IMR-90 (cell line): ENCODE measurements at regions of chr1 and their contacts with region 1.

Region 1: DNA sequence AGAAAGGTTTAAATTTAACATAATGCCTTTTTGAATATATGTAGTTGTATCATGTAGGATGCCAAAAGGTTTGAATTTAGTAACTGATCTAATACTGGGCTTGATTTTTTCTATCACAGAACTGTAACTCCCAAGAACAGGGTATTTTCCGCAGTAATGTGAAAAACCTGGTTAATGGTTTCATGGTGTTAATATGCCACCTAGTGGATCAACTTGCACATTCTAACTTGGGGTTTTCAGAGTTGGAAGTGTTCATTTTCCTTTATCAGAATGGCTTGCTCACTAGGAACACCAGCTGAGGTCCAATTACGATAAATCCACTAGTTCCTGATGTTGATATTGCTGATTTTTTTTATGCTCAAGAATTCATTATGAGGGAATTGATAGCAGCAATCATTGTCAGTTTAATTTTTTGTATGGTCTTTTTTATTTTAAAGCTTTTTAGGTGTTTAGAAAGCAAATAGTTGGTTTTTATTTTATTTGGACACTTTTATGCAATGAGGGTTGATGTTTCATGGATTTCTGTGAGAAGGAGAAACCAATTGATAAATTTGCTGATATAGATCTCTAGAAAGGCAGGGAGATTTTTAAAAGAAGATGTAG is 157.2 kb downstream of the PLA2G4A start:
- DNase-seq: peak; percentile 78
- ATAC-seq: peak; percentile 72
- H3K4me3 ChIP-seq: no peak overlapping the region
- H3K27ac ChIP-seq: no peak overlapping the region
- H3K4me1 ChIP-seq: peaks cover 6% of the 10 kb centered on the region
- H3K27me3 ChIP-seq: no peaks in the 10 kb centered on the region
- CTCF ChIP-seq: peak; percentile 90
- POLR2A ChIP-seq: 0 out of 2 replicates have a peak, but pooled peaks have one; percentile 38
- RAD21 ChIP-seq: peak; percentile 96

Region 2: GRCh38 chr1:186404454-186405051 is 581.4 kb before region 1 on chr1:
- CTCF ChIA-PET with region 1: no interaction called
- POLR2A ChIA-PET with region 1: no interaction called
- dilution Hi-C with region 1: no loop called
- in situ Hi-C with region 1: loop called (anchors 5 kb)
- intact Hi-C with region 1: loop called (anchors 1 kb)
- DNase-seq: peak; percentile 76
- ATAC-seq: peak; percentile 92
- H3K4me3 ChIP-seq: no peak overlapping the region
- H3K27ac ChIP-seq: no peak overlapping the region
- H3K4me1 ChIP-seq: no peaks in the 10 kb centered on the region; the same call in 1 of the 2 replicates
- H3K27me3 ChIP-seq: no peaks in the 10 kb centered on the region
- CTCF ChIP-seq: peak; percentile 80
- POLR2A ChIP-seq: no peak
- RAD21 ChIP-seq: peak; percentile 72

Region 3: GRCh38 chr1:186605762-186606350 is 380.1 kb before region 1 on chr1:
- CTCF ChIA-PET with region 1: interaction called, 4 read pairs
- POLR2A ChIA-PET with region 1: no interaction called
- dilution Hi-C with region 1: loop called (anchors 25 kb)
- in situ Hi-C with region 1: loop called (anchors 5 kb)
- intact Hi-C with region 1: loop called (anchors 1 kb)
- DNase-seq: peak; percentile 59
- ATAC-seq: peak; percentile 88
- H3K4me3 ChIP-seq: no peak overlapping the region
- H3K27ac ChIP-seq: no peak overlapping the region
- H3K4me1 ChIP-seq: no peaks in the 10 kb centered on the region
- H3K27me3 ChIP-seq: no peaks in the 10 kb centered on the region
- CTCF ChIP-seq: peak; percentile 68
- POLR2A ChIP-seq: no peak
- RAD21 ChIP-seq: peak; percentile 81

Region 4: GRCh38 chr1:186680245-186681061 is 305.5 kb before region 1 on chr1 and contains the start of gene PTGS2:
- CTCF ChIA-PET with region 1: no interaction called
- POLR2A ChIA-PET with region 1: no interaction called
- dilution Hi-C with region 1: no loop called
- in situ Hi-C with region 1: loop called (anchors 10 kb)
- intact Hi-C with region 1: loop called (anchors 1 kb)
- DNase-seq: peak; percentile 93
- ATAC-seq: peak; percentile 96
- H3K4me3 ChIP-seq: peak within 1 kb of the TSS; percentile 65
- H3K27ac ChIP-seq: peak within 1 kb of the TSS; percentile 72
- H3K4me1 ChIP-seq: no peaks in the 10 kb centered on the region
- H3K27me3 ChIP-seq: no peaks in the 10 kb centered on the region
- CTCF ChIP-seq: peak; percentile 60
- POLR2A ChIP-seq: peak; percentile 85
- RAD21 ChIP-seq: peak; percentile 35
- total RNA-seq, gene PTGS2: 4.8 and 6.9 TPM in 2 replicates

Region 5: DNA sequence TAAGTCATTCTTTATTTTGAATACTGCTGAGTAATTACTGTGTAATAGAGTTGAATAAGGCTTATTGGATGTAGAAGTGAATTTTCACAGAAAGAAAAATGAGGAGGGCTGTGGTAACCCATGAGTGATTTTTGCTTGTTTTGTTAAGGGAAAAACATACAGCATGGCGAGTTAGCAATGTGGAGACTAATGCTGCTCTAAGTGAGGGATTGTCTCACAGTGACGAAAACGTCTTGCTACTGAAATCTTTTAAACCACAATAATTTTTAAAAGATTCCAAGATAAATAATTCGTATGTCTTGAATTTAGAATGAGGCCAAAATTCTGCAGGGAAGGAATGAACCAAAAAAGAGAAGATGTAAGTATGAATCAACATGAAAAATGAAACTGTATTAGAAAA is 173.4 kb before region 1 on chr1:
- CTCF ChIA-PET with region 1: no interaction called
- POLR2A ChIA-PET with region 1: no interaction called
- dilution Hi-C with region 1: no loop called
- in situ Hi-C with region 1: no loop called
- intact Hi-C with region 1: loop called (anchors 5 kb)
- DNase-seq: peak; percentile 96
- ATAC-seq: peak; percentile 98
- H3K4me3 ChIP-seq: no peak overlapping the region
- H3K27ac ChIP-seq: no peak overlapping the region
- H3K4me1 ChIP-seq: no peaks in the 10 kb centered on the region
- H3K27me3 ChIP-seq: no peaks in the 10 kb centered on the region; the same call in 1 of the 2 replicates
- CTCF ChIP-seq: no peak
- POLR2A ChIP-seq: no peak
- RAD21 ChIP-seq: no peak

Region 6: GRCh38 chr1:186915555-186915954 is 70.4 kb before region 1 on chr1:
- CTCF ChIA-PET with region 1: no interaction called
- POLR2A ChIA-PET with region 1: no interaction called
- dilution Hi-C with region 1: no loop called
- in situ Hi-C with region 1: no loop called
- intact Hi-C with region 1: loop called (anchors 1 kb)
- DNase-seq: no peak
- ATAC-seq: no peak
- H3K4me3 ChIP-seq: no peak overlapping the region
- H3K27ac ChIP-seq: no peak overlapping the region
- H3K4me1 ChIP-seq: no peaks in the 10 kb centered on the region
- H3K27me3 ChIP-seq: no peaks in the 10 kb centered on the region
- CTCF ChIP-seq: 0 out of 2 replicates have a peak, but pooled peaks have one; percentile 18
- POLR2A ChIP-seq: no peak
- RAD21 ChIP-seq: peak; percentile 22; the same call in 1 of the 2 replicates

Region 7: GRCh38 chr1:186950547-186950946 is 35.4 kb before region 1 on chr1:
- CTCF ChIA-PET with region 1: no interaction called
- POLR2A ChIA-PET with region 1: no interaction called
- dilution Hi-C with region 1: no loop called
- in situ Hi-C with region 1: no loop called
- intact Hi-C with region 1: no loop called
- DNase-seq: peak; percentile 31
- ATAC-seq: no peak
- H3K4me3 ChIP-seq: no peak overlapping the region
- H3K27ac ChIP-seq: no peak overlapping the region
- H3K4me1 ChIP-seq: no peaks in the 10 kb centered on the region
- H3K27me3 ChIP-seq: no peaks in the 10 kb centered on the region
- CTCF ChIP-seq: no peak
- POLR2A ChIP-seq: no peak
- RAD21 ChIP-seq: no peak

Region 8: DNA sequence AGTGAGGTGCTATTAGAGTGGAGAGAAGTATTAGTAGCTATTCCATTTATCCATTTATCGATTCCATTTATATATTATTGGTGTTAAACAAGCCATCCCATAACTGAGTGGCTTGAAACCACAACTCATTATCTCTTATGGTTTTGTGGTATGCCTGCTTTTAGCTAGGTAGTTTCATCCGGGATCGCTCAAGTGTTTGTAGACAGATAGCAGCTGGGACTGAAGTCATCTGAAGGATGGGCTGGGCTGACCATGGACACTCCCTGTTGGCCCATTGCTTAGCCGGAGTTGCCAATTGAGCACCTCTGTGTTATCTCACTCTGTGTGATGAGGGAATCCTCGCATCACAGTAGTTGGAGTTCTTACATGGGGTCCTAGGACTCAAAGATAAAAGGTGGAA is 465.2 kb after region 1 on chr1:
- CTCF ChIA-PET with region 1: no interaction called
- POLR2A ChIA-PET with region 1: no interaction called
- dilution Hi-C with region 1: no loop called
- in situ Hi-C with region 1: no loop called
- intact Hi-C with region 1: no loop called
- DNase-seq: no peak
- ATAC-seq: no peak
- H3K4me3 ChIP-seq: no peak overlapping the region
- H3K27ac ChIP-seq: no peak overlapping the region
- H3K4me1 ChIP-seq: no peaks in the 10 kb centered on the region
- H3K27me3 ChIP-seq: no peaks in the 10 kb centered on the region
- CTCF ChIP-seq: no peak
- POLR2A ChIP-seq: no peak
- RAD21 ChIP-seq: no peak